PC-9 (cell line): ENCODE measurements at regions of chr11 and their contacts with region 1.

Region 1: DNA sequence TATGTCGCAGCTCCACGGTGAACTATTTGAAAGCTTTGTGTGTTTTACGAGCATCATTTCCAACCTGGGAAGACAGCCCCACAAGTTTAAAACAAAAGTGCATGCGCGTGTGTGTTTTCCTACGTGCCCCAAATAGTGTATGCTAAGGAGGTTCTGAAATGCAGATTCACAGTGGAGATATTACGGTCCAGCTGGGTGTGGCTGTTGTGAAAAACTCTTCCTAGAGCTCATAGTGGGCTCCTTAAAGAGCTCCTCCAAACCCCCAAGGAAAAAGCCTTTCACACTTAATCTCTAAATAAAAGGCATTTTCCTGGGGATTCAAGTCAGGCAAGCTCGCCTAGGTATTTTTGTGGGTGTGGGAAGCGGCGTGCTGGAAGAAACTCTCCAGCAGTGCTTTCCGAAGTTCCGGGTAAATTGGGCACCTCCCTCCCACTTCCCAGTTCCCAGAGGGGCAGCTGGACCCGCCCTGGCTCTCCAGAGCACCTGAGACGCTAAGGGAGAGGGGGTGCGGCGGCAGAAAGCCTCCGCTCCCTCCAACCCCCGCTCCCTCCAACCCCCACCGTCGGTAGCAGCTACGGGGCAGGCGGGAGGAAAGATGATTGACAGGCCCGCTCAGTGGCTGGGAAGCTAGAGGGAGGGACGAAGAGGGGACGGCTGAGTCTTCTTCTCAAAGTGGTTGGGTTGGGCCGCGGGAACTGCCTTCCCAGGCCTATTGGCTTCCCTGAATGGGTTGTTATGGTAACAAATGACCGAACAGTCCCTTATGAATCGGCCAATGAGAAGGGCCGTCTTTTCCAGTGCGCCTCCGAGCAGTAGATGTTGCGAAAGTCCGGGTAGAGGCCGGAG is 558 bp upstream of the PCF11 start:
- DNase-seq: peak; percentile 96 to 100
- H3K4me3 ChIP-seq: peak overlapping the region; percentile 75
- H3K27ac ChIP-seq: peak overlapping the region; percentile 82
- H3K4me1 ChIP-seq: peaks cover 35% of the 10 kb centered on the region
- H3K27me3 ChIP-seq: no peaks in the 10 kb centered on the region
- CTCF ChIP-seq: no peak

Region 2: GRCh38 chr11:82718307-82718706 is 438.1 kb before region 1 on chr11:
- CTCF ChIA-PET with region 1: no interaction called
- POLR2A ChIA-PET with region 1: no interaction called
- intact Hi-C with region 1: loop called (anchors 5 kb)
- DNase-seq: peak; percentile 32 to 53
- H3K4me3 ChIP-seq: no peak overlapping the region
- H3K27ac ChIP-seq: no peak overlapping the region
- H3K4me1 ChIP-seq: no peaks in the 10 kb centered on the region
- H3K27me3 ChIP-seq: peaks cover 7% of the 10 kb centered on the region; the same call in 1 of the 2 replicates
- CTCF ChIP-seq: peak; percentile 92

Region 3: DNA sequence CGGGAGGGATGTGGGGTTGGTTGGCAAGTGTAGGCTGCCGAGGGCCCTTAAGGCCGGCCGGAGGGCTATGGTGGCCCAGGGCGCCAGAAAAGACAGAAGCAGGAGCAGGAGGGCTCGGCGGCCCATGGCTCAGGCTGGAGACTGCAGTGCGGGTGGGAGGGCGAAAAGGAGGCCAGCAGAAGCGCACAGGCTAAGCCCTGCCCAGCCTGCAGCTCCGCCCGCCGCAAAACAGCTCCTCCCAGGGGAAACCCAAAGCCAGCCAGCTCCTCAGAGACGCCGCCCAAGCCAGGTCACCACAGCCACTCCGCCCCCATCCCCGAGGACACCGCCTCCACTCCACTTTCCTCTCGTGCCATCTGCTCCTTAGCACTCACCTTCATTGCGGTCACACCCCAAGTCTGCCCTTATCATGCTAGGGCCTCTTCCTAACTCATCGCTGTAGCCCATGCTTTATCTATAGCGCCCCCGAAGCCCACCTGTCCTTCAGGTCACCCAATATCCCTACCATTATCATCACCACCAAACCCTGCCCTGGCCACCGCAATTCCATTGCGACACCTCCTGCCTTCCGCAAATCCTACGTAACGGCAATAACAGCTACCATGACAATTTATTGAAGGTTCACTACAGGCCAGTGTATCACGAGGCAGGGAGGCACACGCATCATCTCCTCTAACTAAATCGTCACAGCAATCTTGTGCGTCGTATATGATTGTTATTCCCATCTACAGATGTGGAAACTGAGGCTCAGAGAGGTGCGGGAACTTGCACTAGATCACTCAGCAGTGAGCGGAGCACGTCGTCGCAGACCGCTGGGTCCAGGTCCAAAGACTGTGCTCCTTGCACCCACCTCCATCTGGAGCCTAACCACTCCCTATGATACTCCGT is 255.9 kb before region 1 on chr11 and contains the start of gene PRCP:
- CTCF ChIA-PET with region 1: no interaction called
- POLR2A ChIA-PET with region 1: interaction called, 14 read pairs
- intact Hi-C with region 1: loop called (anchors 1 kb)
- DNase-seq: peak; percentile 92 to 95
- H3K4me3 ChIP-seq: peak within 1 kb of the TSS; percentile 88
- H3K27ac ChIP-seq: peak within 1 kb of the TSS; percentile 31; the same call in 1 of the 2 replicates
- H3K4me1 ChIP-seq: peaks cover 17% of the 10 kb centered on the region
- H3K27me3 ChIP-seq: no peaks in the 10 kb centered on the region
- CTCF ChIP-seq: no peak
- total RNA-seq, gene PRCP: 42.7 and 46.2 TPM in 2 replicates

Region 4: GRCh38 chr11:83092488-83093384 is 63.6 kb before region 1 on chr11:
- CTCF ChIA-PET with region 1: no interaction called
- POLR2A ChIA-PET with region 1: no interaction called
- intact Hi-C with region 1: loop called (anchors 2 kb)
- DNase-seq: peak; percentile 38 to 94
- H3K4me3 ChIP-seq: no peak overlapping the region
- H3K27ac ChIP-seq: no peak overlapping the region
- H3K4me1 ChIP-seq: peaks cover 18% of the 10 kb centered on the region
- H3K27me3 ChIP-seq: no peaks in the 10 kb centered on the region
- CTCF ChIP-seq: no peak

Region 5: DNA sequence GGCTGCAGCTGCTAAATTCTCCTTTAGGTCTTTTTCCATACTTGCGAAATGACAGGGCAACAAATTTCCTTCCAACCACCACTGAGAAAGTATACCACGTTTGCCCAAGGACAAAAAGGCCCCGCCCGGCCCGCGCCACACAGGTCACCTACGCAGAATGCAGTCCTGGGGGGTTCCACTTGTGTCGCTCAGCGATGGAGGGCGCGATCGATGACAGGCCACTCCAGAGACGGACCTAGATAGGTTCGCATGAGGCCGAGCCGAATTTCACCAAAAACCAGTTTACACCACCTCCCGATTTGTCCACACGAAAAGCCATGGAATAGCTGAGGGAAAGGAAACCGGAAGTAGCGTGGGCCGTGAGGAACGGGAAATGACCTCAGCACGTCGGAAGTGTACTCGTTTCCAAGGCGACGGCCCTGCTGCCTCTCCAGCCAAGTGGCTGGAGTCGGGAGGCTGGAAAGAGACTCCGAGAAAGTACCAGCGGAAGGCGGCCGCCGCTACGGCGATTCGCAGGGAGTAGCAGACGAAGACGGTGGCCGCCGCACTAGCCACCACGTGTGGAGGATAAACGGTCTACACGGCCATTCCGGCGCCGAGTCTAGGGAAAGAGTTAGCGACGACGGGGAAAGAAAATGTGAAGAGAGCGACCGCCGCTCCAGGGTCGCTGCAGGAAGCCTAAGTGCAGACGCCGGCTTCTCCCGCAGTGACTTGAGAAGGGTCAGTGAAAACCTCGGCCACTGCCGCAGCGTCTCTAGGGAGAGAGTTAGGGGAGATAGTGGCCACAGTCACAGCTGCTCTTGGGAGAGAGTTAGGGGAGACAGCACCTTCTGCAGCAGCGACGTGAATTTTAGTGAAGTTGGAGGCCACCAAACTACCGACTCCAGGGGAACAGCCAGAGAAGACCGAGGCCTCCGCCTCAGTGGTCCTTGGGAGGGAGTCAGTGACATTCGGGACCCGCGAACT is 37.2 kb after region 1 on chr11 and contains the start of gene ANKRD42:
- CTCF ChIA-PET with region 1: no interaction called
- POLR2A ChIA-PET with region 1: interaction called, 8 read pairs
- intact Hi-C with region 1: loop called (anchors 2 kb)
- DNase-seq: peak; percentile 87 to 96
- H3K4me3 ChIP-seq: peak within 1 kb of the TSS; percentile 72
- H3K27ac ChIP-seq: peak within 1 kb of the TSS; percentile 42
- H3K4me1 ChIP-seq: peaks cover 32% of the 10 kb centered on the region
- H3K27me3 ChIP-seq: no peaks in the 10 kb centered on the region
- CTCF ChIP-seq: no peak
- total RNA-seq, gene ANKRD42: 6.8 and 10.4 TPM in 2 replicates

Region 6: GRCh38 chr11:83285771-83286528 is 129.6 kb after region 1 on chr11 and contains the start of gene CCDC90B:
- CTCF ChIA-PET with region 1: no interaction called
- POLR2A ChIA-PET with region 1: interaction called, 8 read pairs
- intact Hi-C with region 1: loop called (anchors 5 kb)
- DNase-seq: peak; percentile 91 to 97
- H3K4me3 ChIP-seq: peak within 1 kb of the TSS; percentile 75
- H3K27ac ChIP-seq: peak within 1 kb of the TSS; percentile 82
- H3K4me1 ChIP-seq: peaks cover 16% of the 10 kb centered on the region
- H3K27me3 ChIP-seq: no peaks in the 10 kb centered on the region
- CTCF ChIP-seq: no peak
- total RNA-seq, gene CCDC90B: 32.2 and 36.6 TPM in 2 replicates

Region 7: GRCh38 chr11:83349296-83349695 is 192.9 kb after region 1 on chr11:
- CTCF ChIA-PET with region 1: no interaction called
- POLR2A ChIA-PET with region 1: no interaction called
- intact Hi-C with region 1: no loop called
- DNase-seq: no peak
- H3K4me3 ChIP-seq: no peak overlapping the region
- H3K27ac ChIP-seq: no peak overlapping the region
- H3K4me1 ChIP-seq: no peaks in the 10 kb centered on the region
- H3K27me3 ChIP-seq: 0 out of 2 replicates have a peak, but pooled peaks cover 6% of the 10 kb centered on the region
- CTCF ChIP-seq: no peak

Region 8: GRCh38 chr11:84022201-84022600 is 865.8 kb after region 1 on chr11:
- CTCF ChIA-PET with region 1: no interaction called
- POLR2A ChIA-PET with region 1: no interaction called
- intact Hi-C with region 1: no loop called
- DNase-seq: no peak
- H3K4me3 ChIP-seq: no peak overlapping the region
- H3K27ac ChIP-seq: no peak overlapping the region
- H3K4me1 ChIP-seq: no peaks in the 10 kb centered on the region
- H3K27me3 ChIP-seq: no peaks in the 10 kb centered on the region
- CTCF ChIP-seq: no peak